Activated CD4-positive, alpha-beta memory T cell treated with anti-CD3 and anti-CD28 coated beads for 36 hours (primary cell): ENCODE measurements at regions of chr6 and their contacts with region 1.

Region 1: GRCh38 chr6:137937834-137938233 is 70.8 kb downstream of the TNFAIP3 start:
- DNase-seq: no peak
- H3K4me3 Mint-ChIP-seq: no peak overlapping the region
- H3K27ac Mint-ChIP-seq: no peak overlapping the region
- H3K4me1 Mint-ChIP-seq: peaks cover 38% of the 10 kb centered on the region
- H3K27me3 Mint-ChIP-seq: no peaks in the 10 kb centered on the region

Region 2: GRCh38 chr6:137717074-137718073 is 220.5 kb before region 1 on chr6:
- CTCF ChIA-PET with region 1: no interaction called
- POLR2A ChIA-PET with region 1: no interaction called
- intact Hi-C with region 1: no loop called
- DNase-seq: peak; percentile 90
- H3K4me3 Mint-ChIP-seq: no peak overlapping the region
- H3K27ac Mint-ChIP-seq: peak overlapping the region; percentile 69
- H3K4me1 Mint-ChIP-seq: peaks cover 47% of the 10 kb centered on the region
- H3K27me3 Mint-ChIP-seq: no peaks in the 10 kb centered on the region

Region 3: DNA sequence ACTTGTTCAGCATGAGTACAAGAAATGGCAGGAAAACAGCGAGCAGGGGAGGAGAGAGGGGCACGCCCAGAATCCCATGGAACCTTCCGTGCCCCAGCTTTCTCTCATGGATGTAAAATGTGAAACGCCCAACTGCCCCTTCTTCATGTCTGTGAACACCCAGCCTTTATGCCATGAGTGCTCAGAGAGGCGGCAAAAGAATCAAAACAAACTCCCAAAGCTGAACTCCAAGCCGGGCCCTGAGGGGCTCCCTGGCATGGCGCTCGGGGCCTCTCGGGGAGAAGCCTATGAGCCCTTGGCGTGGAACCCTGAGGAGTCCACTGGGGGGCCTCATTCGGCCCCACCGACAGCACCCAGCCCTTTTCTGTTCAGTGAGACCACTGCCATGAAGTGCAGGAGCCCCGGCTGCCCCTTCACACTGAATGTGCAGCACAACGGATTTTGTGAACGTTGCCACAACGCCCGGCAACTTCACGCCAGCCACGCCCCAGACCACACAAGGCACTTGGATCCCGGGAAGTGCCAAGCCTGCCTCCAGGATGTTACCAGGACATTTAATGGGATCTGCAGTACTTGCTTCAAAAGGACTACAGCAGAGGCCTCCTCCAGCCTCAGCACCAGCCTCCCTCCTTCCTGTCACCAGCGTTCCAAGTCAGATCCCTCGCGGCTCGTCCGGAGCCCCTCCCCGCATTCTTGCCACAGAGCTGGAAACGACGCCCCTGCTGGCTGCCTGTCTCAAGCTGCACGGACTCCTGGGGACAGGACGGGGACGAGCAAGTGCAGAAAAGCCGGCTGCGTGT is 59.1 kb before region 1 on chr6:
- CTCF ChIA-PET with region 1: interaction called, 270 read pairs
- POLR2A ChIA-PET with region 1: interaction called, 33 read pairs
- intact Hi-C with region 1: loop called (anchors 1 kb)
- DNase-seq: no peak
- H3K4me3 Mint-ChIP-seq: peak overlapping the region; percentile 51
- H3K27ac Mint-ChIP-seq: peak overlapping the region; percentile 84
- H3K4me1 Mint-ChIP-seq: peaks cover 89% of the 10 kb centered on the region
- H3K27me3 Mint-ChIP-seq: no peaks in the 10 kb centered on the region